Natural killer cell (primary cell): ENCODE measurements at regions of chr1 and their contacts with region 1.

Region 1: DNA sequence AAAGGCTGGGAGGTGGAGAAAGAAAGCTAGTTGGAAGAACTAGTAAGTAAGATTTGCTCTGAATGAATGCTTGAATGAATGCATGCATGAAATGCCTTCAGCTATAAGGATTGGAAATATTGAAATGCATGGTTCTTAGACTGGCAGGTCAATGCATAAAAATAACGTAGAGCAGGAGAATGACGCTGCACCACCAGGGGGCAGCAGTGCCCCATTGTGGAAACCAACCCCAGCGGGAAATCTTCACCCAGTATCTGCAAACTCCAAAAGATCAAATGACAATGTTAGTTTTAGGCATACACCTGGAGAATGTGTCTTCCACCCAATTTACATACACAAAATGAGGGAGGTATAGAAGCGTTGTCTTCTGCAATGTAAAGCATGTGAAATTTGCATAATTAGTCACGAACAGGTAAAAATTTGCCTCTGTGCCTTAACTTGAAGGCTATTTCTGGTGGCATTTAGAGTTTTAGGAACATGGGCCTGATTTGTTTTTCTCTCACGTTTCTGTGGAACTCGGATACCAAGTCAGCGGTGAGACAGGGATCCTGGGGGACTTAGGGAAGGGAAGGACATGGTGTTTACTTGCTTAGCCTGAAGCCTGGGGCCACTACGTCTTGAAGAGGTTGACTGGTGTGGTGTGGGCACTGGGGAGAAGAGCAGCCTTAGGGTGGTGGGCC is 78.6 kb downstream of the HHAT start:
- DNase-seq: peak; percentile 60 to 83
- ATAC-seq: peak in 2 of 3 donors; percentile 70 to 80
- H3K4me3 ChIP-seq: no peak overlapping the region
- H3K4me3 Mint-ChIP-seq: no peak overlapping the region
- H3K27ac ChIP-seq: no peak overlapping the region
- H3K27ac Mint-ChIP-seq: no peak overlapping the region
- H3K4me1 ChIP-seq: no peaks in the 10 kb centered on the region
- H3K4me1 Mint-ChIP-seq: no peaks in the 10 kb centered on the region
- H3K27me3 ChIP-seq: no peaks in the 10 kb centered on the region
- H3K27me3 Mint-ChIP-seq: no peaks in the 10 kb centered on the region
- CTCF ChIP-seq: peak; percentile 83

Region 2: GRCh38 chr1:211135342-211135950 is 728.1 kb after region 1 on chr1:
- intact Hi-C with region 1: loop called (anchors 1 kb)
- DNase-seq: peak in 1 of 2 donors; percentile 49
- ATAC-seq: no peak
- H3K4me3 ChIP-seq: no peak overlapping the region
- H3K4me3 Mint-ChIP-seq: no peak overlapping the region
- H3K27ac ChIP-seq: no peak overlapping the region
- H3K27ac Mint-ChIP-seq: no peak overlapping the region
- H3K4me1 ChIP-seq: peaks cover 16% of the 10 kb centered on the region
- H3K4me1 Mint-ChIP-seq: peaks cover 0 to 12% of the 10 kb centered on the region in 2 donors
- H3K27me3 ChIP-seq: peaks cover 20% of the 10 kb centered on the region
- H3K27me3 Mint-ChIP-seq: peaks cover 53 to 82% of the 10 kb centered on the region in 2 donors
- CTCF ChIP-seq: peak; percentile 15

Region 3: DNA sequence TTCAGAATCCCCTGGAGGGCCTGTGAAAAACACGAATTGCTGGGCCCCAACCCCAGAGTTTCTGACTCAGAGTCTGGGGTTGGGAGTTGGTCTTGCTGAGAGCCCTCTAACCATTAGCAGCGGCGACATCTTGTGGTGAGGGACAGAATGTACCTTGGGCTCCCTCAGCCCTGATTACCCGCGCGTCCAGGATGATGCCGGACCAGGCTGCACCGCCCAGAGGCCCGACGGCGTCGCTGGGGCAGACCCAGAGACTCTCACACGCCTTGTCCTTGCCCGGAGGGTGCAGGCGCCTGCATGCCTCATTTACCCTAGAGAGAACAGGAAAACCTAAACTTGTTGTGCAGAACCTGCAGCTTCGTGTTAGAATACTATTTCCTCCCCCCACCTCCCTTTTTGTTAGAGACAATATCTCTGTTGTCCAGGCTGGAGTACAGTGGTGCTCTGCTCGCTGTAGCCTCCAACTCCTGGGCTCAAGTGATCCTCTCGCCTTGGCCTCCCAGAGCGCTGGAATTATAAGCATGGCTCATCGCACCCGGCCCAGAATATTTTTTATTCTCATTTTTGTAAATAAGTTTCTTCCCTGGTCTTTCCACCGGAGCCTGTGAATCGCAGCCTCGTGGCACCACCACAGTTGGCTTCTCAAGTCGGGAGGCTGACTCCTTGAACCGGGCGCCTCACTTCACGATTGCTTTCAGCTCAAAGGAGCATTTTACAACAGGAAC is 1106.8 kb after region 1 on chr1:
- intact Hi-C with region 1: loop called (anchors 2 kb)
- DNase-seq: peak; percentile 52 to 78
- ATAC-seq: peak; percentile 74 to 79 (median 78)
- H3K4me3 ChIP-seq: no peak overlapping the region
- H3K4me3 Mint-ChIP-seq: peak overlapping the region; percentile 75
- H3K27ac ChIP-seq: no peak overlapping the region
- H3K27ac Mint-ChIP-seq: peak overlapping the region in 1 of 2 donors; percentile 80
- H3K4me1 ChIP-seq: peaks cover 29% of the 10 kb centered on the region
- H3K4me1 Mint-ChIP-seq: peaks cover 10 to 20% of the 10 kb centered on the region in 2 donors
- H3K27me3 ChIP-seq: peaks cover 2% of the 10 kb centered on the region
- H3K27me3 Mint-ChIP-seq: peaks cover 0 to 3% of the 10 kb centered on the region in 2 donors
- CTCF ChIP-seq: peak; percentile 59